ENCODE measurements at regions of chr6 and their contacts with region 1.

Region 1: DNA sequence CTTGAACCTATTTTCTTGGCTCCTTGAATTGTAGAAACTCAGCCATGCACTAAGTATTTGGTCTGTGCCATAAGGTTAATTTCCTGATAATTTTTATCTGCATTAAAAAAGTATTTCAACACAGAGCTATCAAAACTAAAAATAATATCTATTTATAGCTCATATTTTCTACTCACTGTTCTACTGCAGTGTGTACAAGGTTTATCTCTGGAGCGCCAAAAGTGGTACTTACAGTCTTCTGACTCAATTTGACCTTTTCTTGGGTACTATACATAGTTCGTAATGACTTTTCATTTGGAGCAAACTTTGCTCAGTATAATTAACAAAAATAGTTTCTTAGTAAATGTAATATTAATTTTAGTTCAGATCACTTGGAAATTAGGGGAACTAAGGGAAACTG is 69.2 kb downstream of the IRAK1BP1 start:
- DNase-seq: no peak
- ATAC-seq: peak; percentile 76

Region 2: GRCh38 chr6:78984225-78984950 is 47.9 kb after region 1 on chr6:
- intact Hi-C with region 1: loop called (anchors 5 kb)
- DNase-seq: no peak
- ATAC-seq: peak; percentile 93

Region 3: DNA sequence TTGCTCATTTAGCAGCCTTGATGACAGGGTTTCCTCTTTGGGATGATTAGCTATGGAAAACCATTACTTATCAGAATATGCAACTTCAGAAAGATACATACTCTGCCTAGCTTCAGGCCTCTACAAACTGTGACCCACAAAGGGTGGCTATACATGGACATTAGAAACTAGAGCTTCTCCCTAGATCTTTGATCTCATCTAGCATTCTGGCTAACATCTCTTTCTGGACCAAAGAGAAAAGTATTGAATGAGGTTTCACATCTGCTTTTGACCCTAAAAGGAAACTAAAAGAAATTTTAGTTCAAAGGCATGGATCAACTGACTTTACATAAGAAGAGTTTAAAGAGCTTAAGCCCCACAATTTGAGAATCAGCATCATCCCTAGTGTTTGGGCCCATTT is 310.4 kb after region 1 on chr6:
- intact Hi-C with region 1: no loop called
- DNase-seq: no peak
- ATAC-seq: no peak